ENCODE measurements at regions of chr2 and their contacts with region 1.

Region 1: GRCh38 chr2:197378494-197379307 is 56.1 kb downstream of the SF3B1 start:
- DNase-seq: peak; percentile 89
- H3K4me3 Mint-ChIP-seq: no peak overlapping the region
- H3K27ac Mint-ChIP-seq: no peak overlapping the region
- H3K4me1 Mint-ChIP-seq: peaks cover 22% of the 10 kb centered on the region
- H3K27me3 Mint-ChIP-seq: peaks cover 12% of the 10 kb centered on the region

Region 2: GRCh38 chr2:196750982-196751635 is 627.6 kb before region 1 on chr2:
- intact Hi-C with region 1: loop called (anchors 10 kb)
- DNase-seq: peak; percentile 90
- H3K4me3 Mint-ChIP-seq: no peak overlapping the region
- H3K27ac Mint-ChIP-seq: no peak overlapping the region
- H3K4me1 Mint-ChIP-seq: peaks cover 16% of the 10 kb centered on the region
- H3K27me3 Mint-ChIP-seq: no peaks in the 10 kb centered on the region

Region 3: GRCh38 chr2:197011799-197012641 is 366.7 kb before region 1 on chr2:
- intact Hi-C with region 1: loop called (anchors 2 kb)
- DNase-seq: peak; percentile 68
- H3K4me3 Mint-ChIP-seq: no peak overlapping the region
- H3K27ac Mint-ChIP-seq: peak overlapping the region; percentile 71
- H3K4me1 Mint-ChIP-seq: peaks cover 6% of the 10 kb centered on the region
- H3K27me3 Mint-ChIP-seq: no peaks in the 10 kb centered on the region

Region 4: GRCh38 chr2:197113275-197113711 is 265.4 kb before region 1 on chr2:
- intact Hi-C with region 1: loop called (anchors 1 kb)
- DNase-seq: no peak
- H3K4me3 Mint-ChIP-seq: no peak overlapping the region
- H3K27ac Mint-ChIP-seq: no peak overlapping the region
- H3K4me1 Mint-ChIP-seq: peaks cover 18% of the 10 kb centered on the region
- H3K27me3 Mint-ChIP-seq: no peaks in the 10 kb centered on the region

Region 5: GRCh38 chr2:197191177-197191939 is 187.3 kb before region 1 on chr2:
- intact Hi-C with region 1: loop called (anchors 1 kb)
- DNase-seq: peak; percentile 73
- H3K4me3 Mint-ChIP-seq: no peak overlapping the region
- H3K27ac Mint-ChIP-seq: peak overlapping the region; percentile 69
- H3K4me1 Mint-ChIP-seq: peaks cover 68% of the 10 kb centered on the region
- H3K27me3 Mint-ChIP-seq: no peaks in the 10 kb centered on the region

Region 6: GRCh38 chr2:197322724-197323720 is 55.7 kb before region 1 on chr2:
- intact Hi-C with region 1: loop called (anchors 2 kb)
- DNase-seq: peak; percentile 77
- H3K4me3 Mint-ChIP-seq: peak overlapping the region; percentile 82
- H3K27ac Mint-ChIP-seq: peak overlapping the region; percentile 96
- H3K4me1 Mint-ChIP-seq: peaks cover 53% of the 10 kb centered on the region
- H3K27me3 Mint-ChIP-seq: no peaks in the 10 kb centered on the region

Region 7: GRCh38 chr2:197705121-197705911 is 326.6 kb after region 1 on chr2 and contains the start of gene MARS2:
- intact Hi-C with region 1: no loop called
- DNase-seq: peak; percentile 98
- H3K4me3 Mint-ChIP-seq: peak within 1 kb of the TSS; percentile 85
- H3K27ac Mint-ChIP-seq: peak within 1 kb of the TSS; percentile 96
- H3K4me1 Mint-ChIP-seq: peaks cover 38% of the 10 kb centered on the region
- H3K27me3 Mint-ChIP-seq: peaks cover 5% of the 10 kb centered on the region
- total RNA-seq, gene MARS2: 23.1 and 23.2 TPM in 2 replicates

Measured in activated CD4-positive, alpha-beta T cell treated with anti-CD3 and anti-CD28 coated beads, Interleukin-2, amount 10 ng/mL, durations not matched to agents 24 days and 14 days (primary cell).